ENCODE measurements at regions of chr10 and their contacts with region 1.

Region 1: GRCh38 chr10:22816298-22816653 is 101.9 kb upstream of the PIP4K2A start:
- DNase-seq: peak; percentile 80
- H3K4me3 ChIP-seq: no peak overlapping the region
- H3K27ac ChIP-seq: peak overlapping the region; percentile 88
- H3K4me1 ChIP-seq: peaks cover 15% of the 10 kb centered on the region
- H3K27me3 ChIP-seq: no peaks in the 10 kb centered on the region
- CTCF ChIP-seq: no peak

Region 2: GRCh38 chr10:22244001-22244400 is 572.3 kb before region 1 on chr10:
- CTCF ChIA-PET with region 1: no interaction called
- dilution Hi-C with region 1: no loop called
- in situ Hi-C with region 1: no loop called
- intact Hi-C with region 1: loop called (anchors 5 kb)
- DNase-seq: no peak
- H3K4me3 ChIP-seq: no peak overlapping the region
- H3K27ac ChIP-seq: no peak overlapping the region
- H3K4me1 ChIP-seq: peaks cover 17% of the 10 kb centered on the region
- H3K27me3 ChIP-seq: no peaks in the 10 kb centered on the region
- CTCF ChIP-seq: no peak

Region 3: GRCh38 chr10:22436884-22437619 is 379.2 kb before region 1 on chr10:
- CTCF ChIA-PET with region 1: no interaction called
- dilution Hi-C with region 1: no loop called
- in situ Hi-C with region 1: no loop called
- intact Hi-C with region 1: loop called (anchors 5 kb)
- DNase-seq: peak; percentile 77
- H3K4me3 ChIP-seq: peak overlapping the region; percentile 62 to 67 (median 66)
- H3K27ac ChIP-seq: peak overlapping the region; percentile 66
- H3K4me1 ChIP-seq: peaks cover 34% of the 10 kb centered on the region
- H3K27me3 ChIP-seq: no peaks in the 10 kb centered on the region
- CTCF ChIP-seq: peak in 1 of 2 donors; percentile 37

Region 4: DNA sequence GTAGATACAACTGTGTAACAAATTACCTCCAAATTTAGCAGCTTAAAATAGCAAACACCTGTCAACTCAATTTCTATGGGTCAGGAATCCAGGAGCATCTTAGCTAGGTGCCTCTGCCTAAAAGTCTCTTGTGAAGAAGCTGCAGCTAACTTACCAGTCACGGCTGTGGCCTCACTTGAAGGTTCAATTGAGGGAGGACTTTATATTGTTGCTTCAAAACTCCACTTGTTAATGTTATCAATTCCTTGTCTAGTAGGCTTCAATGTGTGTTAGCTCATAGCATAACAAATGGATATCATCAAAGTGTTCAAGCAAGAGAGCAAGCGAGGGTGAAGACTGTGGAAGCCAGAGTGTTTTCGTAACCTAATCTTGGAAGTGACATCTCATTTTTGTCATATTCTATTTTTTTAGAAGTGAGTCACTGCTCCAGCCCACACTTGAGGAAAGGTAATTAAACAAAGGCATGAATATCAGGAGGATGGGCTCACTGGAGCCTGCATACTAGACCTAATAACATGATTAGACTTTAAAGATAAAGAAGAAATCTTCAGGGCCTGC is 298.0 kb before region 1 on chr10:
- CTCF ChIA-PET with region 1: no interaction called
- dilution Hi-C with region 1: no loop called
- in situ Hi-C with region 1: no loop called
- intact Hi-C with region 1: no loop called
- DNase-seq: no peak
- H3K4me3 ChIP-seq: no peak overlapping the region
- H3K27ac ChIP-seq: no peak overlapping the region
- H3K4me1 ChIP-seq: no peaks in the 10 kb centered on the region
- H3K27me3 ChIP-seq: peaks cover 3% of the 10 kb centered on the region
- CTCF ChIP-seq: no peak

Region 5: DNA sequence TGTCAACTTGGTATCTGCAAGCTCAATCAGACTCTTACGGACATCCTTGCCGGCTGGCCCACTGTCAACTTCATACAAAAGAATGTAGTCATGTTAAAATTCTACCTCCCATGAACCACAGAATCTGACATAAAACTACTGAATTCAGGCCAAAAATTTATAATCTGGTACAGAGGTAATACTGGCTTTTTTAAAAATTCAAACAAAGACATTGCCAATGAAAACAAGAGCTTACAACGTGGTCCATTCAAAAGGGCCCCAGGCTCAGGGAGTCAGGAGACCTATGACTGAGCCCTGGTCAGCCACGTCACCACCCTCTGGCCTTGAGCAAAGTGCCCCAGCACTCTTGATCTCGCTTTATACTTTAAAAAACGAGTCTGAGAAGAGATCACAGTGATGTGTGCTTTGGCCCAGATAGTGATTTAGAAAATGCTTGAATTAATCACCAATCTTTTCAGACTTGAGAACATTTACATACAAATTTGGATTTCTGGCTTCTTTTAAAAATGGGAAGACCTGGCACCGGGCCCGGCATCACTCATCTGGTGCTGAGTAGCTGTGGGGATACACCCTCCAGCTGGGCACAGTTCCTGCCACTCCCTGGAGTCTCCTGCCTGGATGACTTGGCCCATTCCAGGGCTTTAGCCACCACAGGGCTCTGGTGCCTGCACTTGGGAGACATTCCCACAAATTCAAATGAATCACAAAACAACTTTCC is 196.0 kb before region 1 on chr10:
- CTCF ChIA-PET with region 1: no interaction called
- dilution Hi-C with region 1: no loop called
- in situ Hi-C with region 1: no loop called
- intact Hi-C with region 1: loop called (anchors 10 kb)
- DNase-seq: peak; percentile 93
- H3K4me3 ChIP-seq: peak overlapping the region in 1 of 3 experiments; percentile 8
- H3K27ac ChIP-seq: peak overlapping the region; percentile 89
- H3K4me1 ChIP-seq: peaks cover 42% of the 10 kb centered on the region
- H3K27me3 ChIP-seq: no peaks in the 10 kb centered on the region
- CTCF ChIP-seq: no peak

Measured in mammary epithelial cell (primary cell).